ENCODE measurements at regions of chr4 and their contacts with region 1.

Region 1: GRCh38 chr4:87856816-87857215 is 24.0 kb downstream of the MEPE start:
- DNase-seq: no peak
- H3K4me3 ChIP-seq: no peak overlapping the region
- H3K27ac ChIP-seq: no peak overlapping the region
- H3K27me3 ChIP-seq: no peaks in the 10 kb centered on the region
- CTCF ChIP-seq: no peak

Region 2: DNA sequence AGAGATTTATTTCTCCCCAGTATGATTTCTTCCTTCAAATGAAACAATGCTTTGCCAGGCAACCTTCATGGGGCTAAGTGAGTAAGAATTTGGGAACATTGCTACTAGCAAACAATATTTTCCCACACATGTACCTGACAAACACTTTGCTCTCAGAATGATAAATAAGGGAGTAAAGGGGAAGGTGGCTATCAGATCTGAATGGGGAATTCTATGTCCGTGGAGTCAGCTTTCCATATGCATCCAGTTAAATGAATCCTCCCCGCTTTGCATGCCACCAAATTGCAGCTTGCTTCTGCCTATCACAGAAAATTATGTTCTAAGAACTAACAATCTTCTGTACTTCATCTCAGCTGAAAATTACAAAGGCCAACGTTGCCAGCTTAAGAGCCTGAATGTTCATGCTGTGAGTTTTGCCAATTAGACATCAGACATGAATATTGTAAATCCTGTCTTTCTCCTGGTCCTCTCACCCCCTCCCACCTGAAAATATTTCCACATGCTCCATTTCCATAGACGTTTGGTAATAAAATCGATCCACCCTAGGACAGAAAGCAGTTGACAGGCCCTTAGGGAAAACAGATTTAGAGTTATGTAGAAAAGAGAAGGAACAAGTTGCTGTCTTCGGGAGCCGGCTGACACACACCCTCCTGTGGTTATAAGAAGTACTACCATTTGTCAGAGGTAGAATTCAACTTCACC is 17.8 kb before region 1 on chr4:
- intact Hi-C with region 1: no loop called
- DNase-seq: peak in 7 of 10 donors; percentile 23 to 63 (median 48)
- H3K4me3 ChIP-seq: peak overlapping the region in 1 of 59 donors; percentile 5
- H3K27ac ChIP-seq: peak overlapping the region; percentile 33 to 98 (median 93)
- H3K27me3 ChIP-seq: no peaks in the 10 kb centered on the region
- CTCF ChIP-seq: peak; percentile 71 to 93 (median 85)

Region 3: DNA sequence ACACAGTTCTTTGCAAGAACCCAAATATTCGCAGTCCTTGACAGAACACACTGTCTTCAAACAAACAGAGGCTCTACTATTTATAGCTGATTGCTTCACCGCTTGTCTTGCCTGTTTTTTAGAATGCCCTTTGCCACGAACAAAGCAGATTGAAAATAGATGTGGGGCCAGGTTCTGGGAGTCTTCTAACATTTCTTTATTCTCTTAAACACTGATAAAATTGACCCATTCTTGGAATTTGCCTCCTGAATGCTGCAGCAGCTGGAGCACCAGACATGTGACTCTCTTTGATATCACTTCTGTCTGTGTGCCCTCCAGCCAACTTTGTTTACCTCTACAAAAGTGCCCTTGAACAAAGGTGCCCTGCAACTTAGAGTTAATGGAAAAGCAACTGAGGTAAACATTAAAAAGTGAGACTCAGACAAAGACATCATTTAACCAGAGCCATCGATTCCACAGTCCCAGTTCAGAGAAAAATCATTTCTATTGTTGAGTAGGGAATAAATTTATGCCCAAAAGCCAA is 54.5 kb after region 1 on chr4:
- intact Hi-C with region 1: loop called in 1 of 2 experiments (anchors 5 kb)
- DNase-seq: no peak
- H3K4me3 ChIP-seq: peak overlapping the region in 41 of 59 donors; percentile 2 to 50 (median 27)
- H3K27ac ChIP-seq: peak overlapping the region; percentile 27 to 93 (median 83)
- H3K27me3 ChIP-seq: no peaks in the 10 kb centered on the region
- CTCF ChIP-seq: no peak

Region 4: GRCh38 chr4:87973283-87974169 is 116.7 kb after region 1 on chr4:
- intact Hi-C with region 1: loop called (anchors 2 kb)
- DNase-seq: peak in 8 of 10 donors; percentile 31 to 73 (median 60)
- H3K4me3 ChIP-seq: peak overlapping the region in 55 of 59 donors; percentile 3 to 67 (median 44)
- H3K27ac ChIP-seq: peak overlapping the region in 45 of 59 donors; percentile 2 to 97 (median 88)
- H3K27me3 ChIP-seq: no peaks in the 10 kb centered on the region
- CTCF ChIP-seq: peak; percentile 85 to 99 (median 92)

Measured in dorsolateral prefrontal cortex (tissue), 120 donors.